ENCODE measurements at regions of chr12 and their contacts with region 1.

Region 1: DNA sequence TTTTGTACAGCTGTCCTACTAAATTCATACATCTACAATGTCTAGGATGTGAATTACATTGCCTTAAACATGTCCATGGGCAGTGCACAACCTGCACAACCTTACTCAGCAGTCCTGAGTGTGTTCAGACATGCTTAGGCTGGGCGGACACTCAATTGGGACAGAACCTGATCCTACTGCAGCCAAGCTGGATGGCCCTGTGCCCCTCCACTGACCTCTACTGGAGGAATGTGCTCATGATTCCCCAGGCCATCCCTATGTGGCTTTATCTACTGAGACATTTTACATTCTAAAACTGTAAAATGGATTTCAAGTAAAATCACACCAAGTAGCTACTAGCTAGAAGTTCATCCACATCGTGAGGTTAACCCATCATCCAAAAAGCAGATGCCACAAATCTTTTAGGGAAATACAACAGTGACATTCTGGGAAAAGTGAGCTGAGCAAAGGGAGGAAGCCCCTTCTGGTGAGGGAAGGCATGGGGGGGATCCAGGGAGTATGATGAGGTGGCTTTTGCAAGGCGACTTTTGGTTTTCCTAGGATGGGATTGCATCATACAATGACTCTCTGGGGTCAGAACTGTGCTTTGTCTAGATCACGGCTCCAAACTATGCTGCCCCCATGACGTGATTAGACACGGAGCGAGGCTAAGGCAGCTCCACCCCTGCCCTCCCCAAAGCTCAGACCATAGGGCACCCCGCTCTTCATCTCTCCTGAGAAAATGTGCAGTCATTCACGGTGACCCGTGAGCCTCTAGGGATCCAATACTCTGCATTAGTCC is 911.7 kb upstream of the TMEM132C start:
- DNase-seq: peak; percentile 17
- H3K4me3 ChIP-seq: no peak overlapping the region
- H3K27ac ChIP-seq: no peak overlapping the region
- H3K4me1 ChIP-seq: no peaks in the 10 kb centered on the region
- H3K27me3 ChIP-seq: no peaks in the 10 kb centered on the region
- CTCF ChIP-seq: peak; percentile 87 to 95

Region 2: GRCh38 chr12:126926023-126926594 is 429.1 kb before region 1 on chr12:
- CTCF ChIA-PET with region 1: interaction called, 3 read pairs
- dilution Hi-C with region 1: no loop called
- in situ Hi-C with region 1: no loop called
- intact Hi-C with region 1: loop called (anchors 2 kb)
- DNase-seq: peak; percentile 4
- H3K4me3 ChIP-seq: no peak overlapping the region
- H3K27ac ChIP-seq: no peak overlapping the region
- H3K4me1 ChIP-seq: no peaks in the 10 kb centered on the region
- H3K27me3 ChIP-seq: no peaks in the 10 kb centered on the region
- CTCF ChIP-seq: peak in 1 of 2 donors; percentile 44

Region 3: GRCh38 chr12:127025545-127025944 is 329.7 kb before region 1 on chr12:
- CTCF ChIA-PET with region 1: interaction called, 5 read pairs
- dilution Hi-C with region 1: no loop called
- in situ Hi-C with region 1: no loop called
- intact Hi-C with region 1: loop called (anchors 1 kb)
- DNase-seq: no peak
- H3K4me3 ChIP-seq: no peak overlapping the region
- H3K27ac ChIP-seq: no peak overlapping the region
- H3K4me1 ChIP-seq: no peaks in the 10 kb centered on the region
- H3K27me3 ChIP-seq: no peaks in the 10 kb centered on the region
- CTCF ChIP-seq: peak; percentile 50 to 58

Region 4: GRCh38 chr12:127145929-127146789 is 209.1 kb before region 1 on chr12:
- CTCF ChIA-PET with region 1: interaction called, 4 read pairs
- dilution Hi-C with region 1: no loop called
- in situ Hi-C with region 1: no loop called
- intact Hi-C with region 1: loop called (anchors 2 kb)
- DNase-seq: peak; percentile 46
- H3K4me3 ChIP-seq: peak overlapping the region; percentile 6 to 73 (median 55)
- H3K27ac ChIP-seq: peak overlapping the region; percentile 35
- H3K4me1 ChIP-seq: peaks cover 12% of the 10 kb centered on the region
- H3K27me3 ChIP-seq: no peaks in the 10 kb centered on the region
- CTCF ChIP-seq: peak in 1 of 2 donors; percentile 25

Region 5: GRCh38 chr12:128245121-128245520 is 889.9 kb after region 1 on chr12:
- CTCF ChIA-PET with region 1: no interaction called
- dilution Hi-C with region 1: no loop called
- in situ Hi-C with region 1: no loop called
- intact Hi-C with region 1: no loop called
- DNase-seq: no peak
- H3K4me3 ChIP-seq: no peak overlapping the region
- H3K27ac ChIP-seq: no peak overlapping the region
- H3K4me1 ChIP-seq: no peaks in the 10 kb centered on the region
- H3K27me3 ChIP-seq: no peaks in the 10 kb centered on the region
- CTCF ChIP-seq: no peak